HCT116 (cell line): ENCODE measurements at regions of chr1 and their contacts with region 1.

Region 1: DNA sequence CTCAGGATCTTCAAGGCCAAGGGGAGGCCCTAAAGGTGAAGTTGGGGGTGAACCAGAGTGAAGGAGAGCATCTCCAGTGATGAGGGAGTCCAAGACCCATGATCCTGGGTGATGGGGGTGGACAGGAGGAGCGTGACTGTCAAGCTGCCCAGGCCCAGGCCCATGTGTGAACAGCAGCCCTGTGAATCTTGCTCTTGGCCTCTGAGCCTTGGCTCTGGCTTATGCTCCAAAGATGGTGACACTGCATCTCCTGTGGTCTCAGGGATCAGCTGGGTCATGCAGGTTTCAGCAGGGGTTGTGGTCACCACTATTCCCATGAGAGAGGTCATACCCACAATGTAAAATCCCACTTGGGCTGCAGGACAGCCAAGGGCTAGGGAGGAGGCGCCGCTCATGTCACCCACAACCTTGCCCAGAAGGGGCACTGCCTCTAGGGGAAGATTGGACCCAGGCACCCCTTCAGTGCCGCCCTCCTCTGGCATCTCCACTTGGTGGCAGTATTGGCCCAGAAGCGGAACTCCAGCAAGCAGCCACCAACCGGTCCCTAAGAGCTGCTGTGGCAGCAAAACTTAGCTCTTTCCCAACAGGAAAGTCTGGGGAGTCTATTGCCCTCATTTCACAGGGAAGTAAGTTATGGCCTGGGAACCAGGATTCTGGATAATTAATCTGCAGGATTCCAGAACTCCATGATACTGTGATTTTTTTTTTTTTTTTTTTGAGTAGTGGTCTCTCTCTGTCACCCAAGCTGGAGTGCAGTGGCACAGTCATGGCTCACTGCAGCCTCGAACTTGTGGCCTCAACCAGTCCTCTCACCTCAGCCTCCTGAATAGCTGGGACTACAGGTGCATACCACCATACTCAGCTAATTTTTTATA is 7.5 kb upstream of the WNT3A start:
- DNase-seq: peak; percentile 71
- ATAC-seq: peak; percentile 94
- H3K4me3 ChIP-seq: no peak overlapping the region
- H3K27ac ChIP-seq: no peak overlapping the region
- H3K4me1 ChIP-seq: no peaks in the 10 kb centered on the region
- H3K27me3 ChIP-seq: no peaks in the 10 kb centered on the region
- CTCF ChIP-seq: peak; percentile 92 to 97 (median 96)
- POLR2A ChIP-seq: no peak
- RAD21 ChIP-seq: peak; percentile 97

Region 2: DNA sequence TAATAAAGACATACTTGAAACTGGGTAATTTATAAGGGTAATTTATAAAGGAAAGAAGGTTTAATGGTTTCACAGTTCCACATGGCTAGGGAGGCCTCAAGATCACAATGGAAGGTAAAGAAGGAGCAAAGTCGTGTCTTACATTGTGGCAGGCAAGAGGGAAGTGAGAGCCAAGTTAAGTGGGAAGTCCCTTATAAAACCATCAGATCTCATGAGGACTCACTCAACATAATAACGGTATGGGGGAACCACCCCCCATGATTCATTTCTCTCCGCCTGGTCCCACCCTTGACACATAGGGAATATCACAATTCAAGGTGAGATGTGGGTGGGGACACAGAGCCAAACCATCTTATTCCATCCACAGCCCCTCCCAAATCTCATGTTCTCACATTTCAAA is 512.7 kb before region 1 on chr1:
- CTCF ChIA-PET with region 1: interaction called, 4 read pairs
- POLR2A ChIA-PET with region 1: no interaction called
- RAD21 ChIA-PET with region 1: no interaction called
- intact Hi-C with region 1: loop called (anchors 1 kb)
- DNase-seq: no peak
- ATAC-seq: no peak
- H3K4me3 ChIP-seq: no peak overlapping the region
- H3K27ac ChIP-seq: no peak overlapping the region
- H3K4me1 ChIP-seq: no peaks in the 10 kb centered on the region
- H3K27me3 ChIP-seq: no peaks in the 10 kb centered on the region
- CTCF ChIP-seq: no peak
- POLR2A ChIP-seq: no peak
- RAD21 ChIP-seq: no peak

Region 3: DNA sequence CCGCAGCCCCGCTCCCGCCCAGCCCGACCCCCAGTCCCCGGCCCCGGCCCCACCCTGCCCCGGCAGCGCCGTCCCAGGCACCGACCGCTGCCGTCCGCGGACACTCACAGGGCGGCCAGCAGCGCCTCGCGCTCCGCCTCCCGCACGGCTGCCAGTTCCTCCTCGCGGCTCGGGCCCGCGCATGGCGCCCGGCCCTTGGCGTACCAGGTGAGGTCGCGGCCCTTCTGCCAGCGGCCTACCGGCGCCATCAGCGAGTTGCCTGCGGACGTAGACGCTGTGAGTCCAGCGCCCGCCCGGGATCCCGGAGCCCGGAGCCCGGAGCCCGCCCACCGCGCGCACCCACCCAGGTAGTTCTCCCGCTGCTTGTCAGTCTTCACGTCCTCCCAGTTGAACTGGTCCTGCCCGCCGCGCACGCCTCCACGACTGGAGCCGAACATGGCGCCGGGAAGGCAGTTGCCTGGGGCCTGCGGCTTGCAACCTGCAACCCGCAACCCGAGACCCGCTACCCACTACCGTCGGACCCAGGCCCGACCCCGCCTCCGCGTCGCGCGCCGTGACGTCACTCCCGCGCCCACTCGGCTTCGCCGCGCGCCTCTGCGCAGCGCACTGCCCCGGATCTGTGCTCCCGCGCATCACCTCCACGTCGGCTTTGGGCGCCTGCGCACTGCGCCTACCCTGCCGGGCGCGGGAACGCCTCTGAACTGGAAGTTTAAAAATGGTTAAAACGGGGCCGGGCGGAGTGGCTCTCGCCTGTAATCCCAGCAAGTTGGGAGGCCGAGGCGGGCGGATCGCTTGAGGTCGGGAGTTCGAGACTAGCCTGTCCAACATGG is 103.7 kb after region 1 on chr1 and contains the start of gene C1orf35:
- CTCF ChIA-PET with region 1: interaction called, 6 read pairs
- POLR2A ChIA-PET with region 1: no interaction called
- RAD21 ChIA-PET with region 1: interaction called in 1 of 2 experiments, 3 read pairs
- intact Hi-C with region 1: loop called (anchors 1 kb)
- DNase-seq: peak; percentile 84
- ATAC-seq: peak; percentile 83
- H3K4me3 ChIP-seq: peak within 1 kb of the TSS; percentile 82 to 91
- H3K27ac ChIP-seq: peak within 1 kb of the TSS; percentile 85
- H3K4me1 ChIP-seq: peaks cover 5 to 22% of the 10 kb centered on the region in 2 experiments; a peak in 3 of 4 replicates
- H3K27me3 ChIP-seq: no peaks in the 10 kb centered on the region
- CTCF ChIP-seq: no peak
- POLR2A ChIP-seq: peak; percentile 79
- RAD21 ChIP-seq: no peak
- total RNA-seq, gene C1orf35: 26.1 TPM

Region 4: DNA sequence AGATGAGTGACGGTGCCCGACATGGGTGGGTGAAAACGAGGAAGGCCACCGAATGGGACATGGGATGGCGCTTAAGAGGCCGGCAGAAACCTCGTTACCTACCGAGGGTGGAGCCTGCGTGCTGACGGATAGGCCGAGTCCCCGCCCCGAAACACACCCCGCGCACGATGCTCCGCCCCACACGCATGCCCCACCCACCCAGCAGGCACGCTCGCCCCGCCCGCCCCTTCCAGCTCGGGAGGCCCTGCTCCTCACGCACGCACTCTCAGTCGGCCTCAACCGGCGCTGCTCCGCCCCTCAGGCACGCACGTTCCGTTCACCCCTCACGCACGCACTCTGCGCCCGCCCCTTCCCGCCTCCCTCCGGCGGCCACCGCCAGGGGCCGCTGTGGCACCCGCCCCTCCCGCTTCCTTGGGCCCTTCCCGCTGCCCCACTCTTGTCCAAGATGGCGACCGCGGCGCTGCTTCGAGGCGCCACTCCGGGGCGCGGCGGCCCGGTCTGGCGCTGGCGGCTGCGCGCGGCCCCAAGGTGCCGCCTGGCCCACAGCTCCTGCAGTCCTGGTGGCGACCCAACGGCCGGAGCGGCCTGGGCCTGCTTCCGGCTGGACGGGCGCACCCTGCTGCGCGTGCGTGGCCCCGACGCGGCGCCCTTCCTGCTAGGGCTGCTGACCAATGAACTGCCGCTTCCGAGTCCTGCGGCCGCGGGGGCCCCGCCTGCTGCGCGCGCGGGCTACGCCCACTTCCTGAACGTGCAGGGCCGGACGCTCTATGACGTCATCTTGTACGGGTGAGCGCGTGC is 166.3 kb after region 1 on chr1 and contains the start of gene IBA57:
- CTCF ChIA-PET with region 1: interaction called, 15 read pairs
- POLR2A ChIA-PET with region 1: no interaction called
- RAD21 ChIA-PET with region 1: interaction called in 1 of 2 experiments, 4 read pairs
- intact Hi-C with region 1: no loop called
- DNase-seq: peak; percentile 97
- ATAC-seq: peak; percentile 88
- H3K4me3 ChIP-seq: peak within 1 kb of the TSS; percentile 76 to 78
- H3K27ac ChIP-seq: peak within 1 kb of the TSS; percentile 100
- H3K4me1 ChIP-seq: peaks cover 10 to 39% of the 10 kb centered on the region in 2 experiments
- H3K27me3 ChIP-seq: no peaks in the 10 kb centered on the region
- CTCF ChIP-seq: peak; percentile 40 to 85 (median 75); a peak in 4 of 6 replicates
- POLR2A ChIP-seq: peak; percentile 64
- RAD21 ChIP-seq: no peak
- total RNA-seq, gene IBA57: 11.6 TPM

Region 5: GRCh38 chr1:228515200-228515834 is 516.0 kb after region 1 on chr1:
- CTCF ChIA-PET with region 1: interaction called, 5 read pairs
- POLR2A ChIA-PET with region 1: no interaction called
- RAD21 ChIA-PET with region 1: no interaction called
- intact Hi-C with region 1: loop called (anchors 2 kb)
- DNase-seq: peak; percentile 22
- ATAC-seq: peak; percentile 70
- H3K4me3 ChIP-seq: no peak overlapping the region
- H3K27ac ChIP-seq: no peak overlapping the region
- H3K4me1 ChIP-seq: no peaks in the 10 kb centered on the region
- H3K27me3 ChIP-seq: peaks cover 28% of the 10 kb centered on the region; the same call in 1 of the 2 replicates
- CTCF ChIP-seq: peak; percentile 61 to 95 (median 73)
- POLR2A ChIP-seq: no peak
- RAD21 ChIP-seq: peak; percentile 93